Heart left ventricle (tissue), 16 donors: ENCODE measurements at regions of chr11 and their contacts with region 1.

Region 1: GRCh38 chr11:57031556-57031955 is 42.8 kb downstream of the OR5AK2 start:
- DNase-seq: no peak
- ATAC-seq: no peak
- H3K4me3 ChIP-seq: no peak overlapping the region
- H3K27ac ChIP-seq: no peak overlapping the region
- H3K4me1 ChIP-seq: no peaks in the 10 kb centered on the region
- H3K27me3 ChIP-seq: no peaks in the 10 kb centered on the region
- CTCF ChIP-seq: no peak
- POLR2A ChIP-seq: no peak

Region 2: DNA sequence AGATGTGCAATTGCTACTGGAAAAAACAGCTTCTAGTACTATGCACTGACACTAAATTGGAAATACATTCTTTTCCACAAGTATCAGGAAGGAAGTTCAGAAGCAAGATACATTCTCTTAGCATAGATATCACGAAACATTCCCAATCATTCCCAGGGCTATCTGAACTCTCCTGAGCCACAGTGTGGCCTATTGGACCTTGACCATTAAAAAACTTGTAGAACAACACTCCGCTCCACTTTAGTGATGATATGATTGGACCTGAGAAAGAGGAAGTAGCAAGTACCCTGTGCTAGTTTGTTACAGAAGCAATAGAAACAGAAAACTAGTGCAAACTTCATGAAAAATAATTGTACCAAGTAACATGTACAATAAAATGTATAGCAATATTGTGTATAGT is 54.2 kb before region 1 on chr11:
- intact Hi-C with region 1: loop called in 1 of 10 experiments (anchors 10 kb)
- DNase-seq: no peak
- ATAC-seq: no peak
- H3K4me3 ChIP-seq: no peak overlapping the region
- H3K27ac ChIP-seq: no peak overlapping the region
- H3K4me1 ChIP-seq: peaks cover 0 to 3% (median 0%) of the 10 kb centered on the region in 12 donors
- H3K27me3 ChIP-seq: no peaks in the 10 kb centered on the region
- CTCF ChIP-seq: no peak
- POLR2A ChIP-seq: no peak

Region 3: GRCh38 chr11:57167125-57167846 is 135.7 kb after region 1 on chr11:
- intact Hi-C with region 1: no loop called
- DNase-seq: no peak
- ATAC-seq: no peak
- H3K4me3 ChIP-seq: no peak overlapping the region
- H3K27ac ChIP-seq: no peak overlapping the region
- H3K4me1 ChIP-seq: peaks cover 0 to 4% (median 0%) of the 10 kb centered on the region in 12 donors
- H3K27me3 ChIP-seq: peaks cover 0 to 3% (median 0%) of the 10 kb centered on the region in 9 donors
- CTCF ChIP-seq: no peak
- POLR2A ChIP-seq: no peak